ENCODE measurements at regions of chr12 and their contacts with region 1.

Region 1: GRCh38 chr12:96445691-96446583 is 43.4 kb upstream of the CFAP54 start:
- DNase-seq: peak; percentile 72
- H3K4me3 Mint-ChIP-seq: peak overlapping the region; percentile 60
- H3K27ac Mint-ChIP-seq: peak overlapping the region; percentile 95
- H3K4me1 Mint-ChIP-seq: peaks cover 38% of the 10 kb centered on the region
- H3K27me3 Mint-ChIP-seq: no peaks in the 10 kb centered on the region

Region 2: GRCh38 chr12:96427269-96427729 is 18.6 kb before region 1 on chr12:
- CTCF ChIA-PET with region 1: interaction called, 4 read pairs
- POLR2A ChIA-PET with region 1: interaction called, 7 read pairs
- intact Hi-C with region 1: loop called (anchors 1 kb)
- DNase-seq: peak; percentile 76
- H3K4me3 Mint-ChIP-seq: peak overlapping the region; percentile 17
- H3K27ac Mint-ChIP-seq: peak overlapping the region; percentile 79
- H3K4me1 Mint-ChIP-seq: peaks cover 47% of the 10 kb centered on the region
- H3K27me3 Mint-ChIP-seq: no peaks in the 10 kb centered on the region

Region 3: GRCh38 chr12:96434107-96434506 is 11.8 kb before region 1 on chr12:
- CTCF ChIA-PET with region 1: interaction called, 14 read pairs
- POLR2A ChIA-PET with region 1: interaction called, 15 read pairs
- intact Hi-C with region 1: loop called (anchors 1 kb)
- DNase-seq: peak; percentile 88
- H3K4me3 Mint-ChIP-seq: peak overlapping the region; percentile 4
- H3K27ac Mint-ChIP-seq: peak overlapping the region; percentile 68
- H3K4me1 Mint-ChIP-seq: peaks cover 31% of the 10 kb centered on the region
- H3K27me3 Mint-ChIP-seq: no peaks in the 10 kb centered on the region

Region 4: DNA sequence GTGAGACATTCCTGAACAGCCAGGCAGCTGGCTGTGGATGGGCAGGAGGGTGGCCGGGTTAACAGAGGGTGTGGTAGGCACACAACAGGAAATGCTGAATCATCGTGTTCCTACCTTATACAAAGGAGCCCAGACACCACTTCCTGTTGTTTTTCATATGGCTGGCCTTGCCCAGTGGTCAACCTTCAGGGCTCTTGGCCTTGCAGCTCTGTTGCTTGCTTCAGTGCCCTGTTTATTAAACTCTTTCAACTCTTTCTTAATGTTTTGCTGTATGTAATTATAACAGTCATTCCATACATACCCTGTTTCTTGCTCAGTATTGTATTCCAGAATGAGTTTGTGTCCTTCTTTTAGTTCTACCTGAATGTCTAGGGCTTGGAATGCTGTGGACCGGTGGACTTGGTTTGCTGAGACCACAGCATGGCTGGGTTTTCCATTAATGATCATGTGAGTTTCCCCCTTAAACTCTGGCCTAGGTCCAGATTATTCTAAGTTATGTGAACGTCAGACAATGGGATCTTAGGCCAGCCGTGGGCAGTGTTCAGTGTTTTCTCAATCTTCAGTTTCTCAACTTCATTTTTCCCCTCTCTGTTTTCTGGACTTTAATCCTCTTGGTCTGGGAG is 55.3 kb after region 1 on chr12:
- CTCF ChIA-PET with region 1: no interaction called
- POLR2A ChIA-PET with region 1: no interaction called
- intact Hi-C with region 1: loop called (anchors 1 kb)
- DNase-seq: peak; percentile 56
- H3K4me3 Mint-ChIP-seq: no peak overlapping the region
- H3K27ac Mint-ChIP-seq: peak overlapping the region; percentile 84
- H3K4me1 Mint-ChIP-seq: peaks cover 39% of the 10 kb centered on the region
- H3K27me3 Mint-ChIP-seq: no peaks in the 10 kb centered on the region

Region 5: DNA sequence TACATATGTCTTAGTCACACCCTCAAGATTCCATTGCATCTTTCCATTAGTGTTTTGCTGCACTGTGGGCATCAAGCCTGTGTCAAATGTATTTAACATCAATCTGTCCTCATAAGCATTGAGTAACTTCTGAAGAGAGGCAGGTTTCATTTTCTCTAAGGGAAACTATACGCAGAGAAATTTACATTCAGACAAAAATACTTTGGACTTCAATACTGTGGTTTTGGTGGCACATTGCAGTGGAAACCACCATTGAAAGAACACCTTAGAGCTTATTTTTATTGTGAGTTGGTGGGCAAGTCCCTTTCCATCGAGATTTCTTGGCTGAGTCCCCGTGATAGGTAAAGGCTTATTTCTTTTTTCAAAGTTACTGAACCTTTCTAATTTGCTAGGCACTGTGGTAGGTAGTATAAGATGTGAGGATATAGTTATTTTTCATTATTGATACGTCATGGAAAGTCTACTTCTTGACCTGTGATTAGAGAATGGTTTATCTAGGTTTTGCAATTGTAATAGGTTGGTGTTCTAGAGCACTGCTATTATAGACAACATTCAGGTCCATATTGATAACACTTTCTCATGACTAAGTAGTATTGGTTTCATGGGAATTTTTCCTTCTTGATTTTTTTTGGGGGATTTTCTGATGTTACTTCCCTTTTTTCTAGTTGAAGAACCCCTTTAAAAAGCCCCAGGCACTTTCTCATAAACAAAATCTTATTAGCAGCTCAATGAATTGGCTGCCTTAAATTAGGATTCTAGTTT is 125.3 kb after region 1 on chr12:
- CTCF ChIA-PET with region 1: no interaction called
- POLR2A ChIA-PET with region 1: interaction called, 3 read pairs
- intact Hi-C with region 1: loop called (anchors 2 kb)
- DNase-seq: peak; percentile 33
- H3K4me3 Mint-ChIP-seq: peak overlapping the region; percentile 40
- H3K27ac Mint-ChIP-seq: peak overlapping the region; percentile 65
- H3K4me1 Mint-ChIP-seq: peaks cover 26% of the 10 kb centered on the region
- H3K27me3 Mint-ChIP-seq: peaks cover 4% of the 10 kb centered on the region

Region 6: DNA sequence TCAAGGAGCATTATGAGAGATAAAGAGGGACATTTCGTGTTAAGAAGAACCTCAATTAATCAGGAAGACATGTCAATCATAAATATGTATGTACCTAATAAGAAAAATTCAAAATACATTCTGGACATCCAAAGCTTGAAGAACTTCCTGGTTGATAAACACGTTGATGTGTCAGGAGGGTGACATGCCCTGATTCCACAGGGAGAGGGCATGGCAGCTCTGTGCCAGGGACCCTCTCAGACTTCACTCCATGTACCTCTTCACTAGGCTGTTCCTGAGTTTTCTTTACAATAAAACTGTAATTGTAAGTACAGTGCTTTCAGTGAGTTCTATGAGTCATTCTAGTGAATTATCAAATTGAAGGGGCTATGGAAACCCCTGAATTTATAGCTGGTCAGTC is 206.9 kb after region 1 on chr12:
- CTCF ChIA-PET with region 1: no interaction called
- POLR2A ChIA-PET with region 1: no interaction called
- intact Hi-C with region 1: no loop called
- DNase-seq: no peak
- H3K4me3 Mint-ChIP-seq: no peak overlapping the region
- H3K27ac Mint-ChIP-seq: no peak overlapping the region
- H3K4me1 Mint-ChIP-seq: no peaks in the 10 kb centered on the region
- H3K27me3 Mint-ChIP-seq: peaks cover 1% of the 10 kb centered on the region

Measured in activated CD4-positive, alpha-beta memory T cell treated with anti-CD3 and anti-CD28 coated beads for 36 hours (primary cell).